GM10248 (cell line): ENCODE measurements at regions of chr3 and their contacts with region 1.

Region 1: DNA sequence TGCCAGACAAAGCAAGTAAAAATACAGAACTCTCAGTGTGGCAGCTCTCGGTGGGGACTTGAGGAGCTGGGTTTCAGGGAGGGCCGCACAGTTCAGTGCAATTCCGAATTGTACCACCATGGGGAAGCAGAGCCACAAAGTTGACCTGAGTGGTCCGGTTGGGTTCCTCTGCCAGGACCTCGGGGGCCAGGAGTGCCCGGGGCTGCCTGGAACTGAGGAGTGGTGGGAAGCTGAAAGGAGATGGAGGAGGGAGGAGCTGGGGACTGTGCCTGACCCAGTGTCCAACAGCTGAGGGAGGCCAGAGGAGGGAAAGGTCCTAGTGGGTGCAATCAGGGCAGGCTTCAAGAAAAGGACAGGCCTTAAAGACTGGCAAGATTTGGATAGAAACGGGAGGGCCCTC is 32.2 kb upstream of the TRH start:
- DNase-seq: peak; percentile 75
- CTCF ChIP-seq: peak; percentile 62

Region 2: GRCh38 chr3:129627429-129628168 is 314.7 kb before region 1 on chr3:
- CTCF ChIA-PET with region 1: interaction called, 18 read pairs
- POLR2A ChIA-PET with region 1: no interaction called
- DNase-seq: peak; percentile 85
- CTCF ChIP-seq: peak; percentile 90

Region 3: GRCh38 chr3:129927072-129927471 is 15.2 kb before region 1 on chr3:
- CTCF ChIA-PET with region 1: interaction called, 22 read pairs
- POLR2A ChIA-PET with region 1: no interaction called
- DNase-seq: no peak
- CTCF ChIP-seq: no peak

Region 4: GRCh38 chr3:129954514-129954913 is 12.2 kb after region 1 on chr3:
- CTCF ChIA-PET with region 1: interaction called, 22 read pairs
- POLR2A ChIA-PET with region 1: no interaction called
- DNase-seq: no peak
- CTCF ChIP-seq: no peak

Region 5: DNA sequence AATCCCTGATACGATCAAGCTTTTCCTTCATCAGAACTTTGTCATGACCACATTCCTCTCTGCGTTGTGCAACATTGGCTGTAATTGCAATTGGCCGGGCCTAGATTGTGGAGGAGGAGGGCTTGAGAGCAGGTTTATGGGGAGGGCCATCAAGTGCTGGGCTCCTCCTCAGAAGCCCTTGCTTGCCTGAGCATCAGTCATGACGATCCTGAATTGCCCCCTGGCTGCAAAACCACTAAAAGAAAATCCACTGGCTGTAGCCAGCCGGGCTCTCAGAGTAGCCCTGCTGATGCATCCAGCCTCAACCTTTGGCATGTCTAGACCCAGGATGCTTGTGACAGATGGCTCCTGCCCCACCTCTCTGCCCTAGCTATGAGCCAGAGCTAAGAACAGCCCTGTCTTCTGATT is 18.8 kb after region 1 on chr3:
- CTCF ChIA-PET with region 1: interaction called, 22 read pairs
- POLR2A ChIA-PET with region 1: no interaction called
- DNase-seq: no peak
- CTCF ChIP-seq: no peak

Region 6: DNA sequence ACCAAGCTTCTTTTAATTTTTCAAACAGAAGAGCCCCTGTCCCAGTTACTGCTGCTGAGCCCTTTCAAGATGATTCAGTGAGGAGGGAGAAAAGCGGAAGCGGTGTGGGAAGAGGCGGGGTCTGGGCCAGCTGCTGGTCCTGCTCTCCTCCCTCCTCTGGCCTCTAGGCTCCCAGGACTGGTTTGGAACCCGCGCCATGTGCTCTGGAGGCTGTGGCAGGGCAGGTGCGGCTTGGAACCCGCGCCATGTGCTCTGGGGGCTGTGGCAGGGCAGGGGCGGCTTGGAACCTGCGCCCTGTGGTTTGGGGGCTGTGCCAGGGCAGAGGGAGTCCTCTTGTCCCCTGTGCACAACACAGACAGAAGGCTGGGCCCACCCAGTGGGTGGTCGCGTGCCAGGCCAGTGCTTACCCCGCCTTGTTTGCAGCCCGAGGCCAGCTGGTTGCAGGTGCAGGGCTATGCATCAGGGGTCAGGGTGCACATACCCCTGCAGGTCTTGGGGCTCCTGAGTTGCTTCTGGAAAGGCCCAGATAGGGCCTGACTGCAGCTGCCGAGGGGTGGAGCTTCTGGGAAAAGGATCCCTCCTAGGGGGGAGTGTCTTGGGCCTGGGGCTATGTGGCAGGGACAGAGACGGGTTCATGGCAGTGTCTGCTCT is 151.6 kb after region 1 on chr3:
- CTCF ChIA-PET with region 1: interaction called, 23 read pairs
- POLR2A ChIA-PET with region 1: no interaction called
- DNase-seq: peak; percentile 54
- CTCF ChIP-seq: no peak

Region 7: GRCh38 chr3:130111185-130111864 is 169.0 kb after region 1 on chr3:
- CTCF ChIA-PET with region 1: interaction called, 21 read pairs
- POLR2A ChIA-PET with region 1: no interaction called
- DNase-seq: peak; percentile 90
- CTCF ChIP-seq: no peak

Region 8: GRCh38 chr3:130569461-130570365 is 627.4 kb after region 1 on chr3:
- CTCF ChIA-PET with region 1: no interaction called
- POLR2A ChIA-PET with region 1: no interaction called
- DNase-seq: no peak
- CTCF ChIP-seq: no peak